H1 (cell line): ENCODE measurements at regions of chr12 and their contacts with region 1.

Region 1: DNA sequence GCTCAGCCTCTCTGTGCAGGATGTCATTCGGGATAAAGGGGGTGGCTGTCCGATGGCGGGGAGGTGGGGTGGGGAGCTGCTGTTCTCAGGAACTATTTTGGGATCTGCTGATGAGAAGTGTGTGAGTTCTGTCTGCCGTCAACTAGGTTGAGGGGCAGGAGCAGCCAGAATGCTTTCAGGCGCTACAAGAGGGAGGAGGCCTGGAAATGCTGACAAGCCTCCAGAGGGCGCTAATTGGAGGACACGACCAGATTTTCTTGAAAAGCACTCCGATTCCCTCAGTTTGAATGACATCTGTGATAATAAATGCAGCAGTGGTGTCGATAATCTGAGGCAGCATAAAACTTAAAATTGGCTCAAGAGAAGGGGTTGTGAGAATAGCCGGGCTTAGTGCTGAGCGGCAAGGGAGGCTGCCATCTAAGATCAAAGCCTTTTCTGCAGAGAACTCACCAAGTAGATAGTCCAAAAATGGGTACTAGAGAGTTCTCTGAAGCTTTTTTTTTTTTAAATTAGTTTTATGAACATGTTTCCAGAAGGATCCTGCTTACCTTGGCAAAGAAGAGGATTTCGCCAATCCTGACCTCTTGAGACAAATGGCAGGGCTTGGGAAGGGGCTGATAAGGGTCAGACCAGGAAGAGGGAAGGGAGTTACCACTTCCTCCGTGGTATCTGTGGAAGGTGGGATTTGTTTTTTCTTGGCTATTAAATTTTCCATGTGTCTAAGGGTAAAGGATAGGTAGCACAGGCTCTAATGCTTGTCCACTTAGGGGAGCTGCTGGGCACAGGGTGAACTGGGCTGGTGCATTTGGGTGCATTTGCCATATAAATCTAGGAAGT is 94.4 kb downstream of the CRACR2A start:
- DNase-seq: peak; percentile 21 to 68
- H3K4me3 ChIP-seq: no peak overlapping the region
- H3K27ac ChIP-seq: no peak overlapping the region
- H3K4me1 ChIP-seq: peaks cover 0 to 10% (median 2%) of the 10 kb centered on the region in 4 experiments; a peak in 2 of 7 replicates
- H3K27me3 ChIP-seq: no peaks in the 10 kb centered on the region
- CTCF ChIP-seq: peak; percentile 68 to 84 (median 77)
- EP300 ChIP-seq: no peak
- POLR2A ChIP-seq: no peak
- RAD21 ChIP-seq: peak; percentile 60 to 68

Region 2: DNA sequence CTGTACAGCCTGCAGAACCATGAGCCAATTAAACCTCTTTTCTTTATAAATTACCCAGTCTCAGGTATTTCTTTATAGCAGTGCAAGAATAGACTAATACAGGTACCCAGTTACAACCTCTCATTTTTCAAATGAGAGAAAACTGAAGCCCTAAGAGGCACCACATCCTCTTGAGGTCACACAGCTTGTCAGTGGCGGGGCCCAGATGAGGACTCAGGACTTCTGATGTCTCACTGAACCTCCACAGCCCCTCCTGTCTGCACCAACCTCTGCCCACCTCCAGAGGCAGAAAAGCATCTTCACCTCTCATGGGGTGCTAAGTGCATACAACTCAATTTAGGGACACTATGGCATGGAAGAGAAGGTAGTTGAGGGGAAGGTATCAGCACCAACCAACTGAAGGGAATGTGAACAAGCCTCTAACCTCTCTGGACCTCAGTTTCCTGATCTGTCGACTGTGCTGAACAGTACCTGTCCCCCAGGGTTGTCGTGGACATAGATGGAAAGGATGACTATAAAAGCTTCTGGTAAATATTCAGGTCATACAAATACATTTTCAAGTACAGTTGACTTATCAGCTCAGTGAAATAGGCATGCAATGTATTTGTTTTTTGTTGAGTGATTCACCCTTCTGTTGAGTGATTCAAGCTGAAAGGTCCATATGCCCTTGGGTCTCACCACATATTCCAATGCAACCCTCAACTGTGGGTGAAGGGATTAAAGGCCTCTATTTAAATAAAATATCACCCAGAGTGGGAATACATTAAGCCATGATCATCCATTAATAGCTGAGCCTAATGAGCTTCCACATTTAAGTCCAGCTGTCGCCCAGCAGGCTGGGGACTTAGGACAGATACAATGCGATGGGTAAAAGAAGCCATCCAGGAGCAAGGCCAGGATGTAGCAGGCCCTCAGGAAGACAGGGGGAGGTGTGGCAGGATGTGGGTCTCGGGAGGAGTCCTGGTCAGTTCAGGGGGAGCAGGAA is 26.0 kb before region 1 on chr12:
- CTCF ChIA-PET with region 1: interaction called, 12 read pairs
- POLR2A ChIA-PET with region 1: no interaction called
- DNase-seq: no peak
- H3K4me3 ChIP-seq: no peak overlapping the region
- H3K27ac ChIP-seq: no peak overlapping the region
- H3K4me1 ChIP-seq: no peaks in the 10 kb centered on the region; a peak in 2 of 7 replicates
- H3K27me3 ChIP-seq: no peaks in the 10 kb centered on the region
- CTCF ChIP-seq: no peak
- EP300 ChIP-seq: no peak
- POLR2A ChIP-seq: no peak
- RAD21 ChIP-seq: no peak

Region 3: DNA sequence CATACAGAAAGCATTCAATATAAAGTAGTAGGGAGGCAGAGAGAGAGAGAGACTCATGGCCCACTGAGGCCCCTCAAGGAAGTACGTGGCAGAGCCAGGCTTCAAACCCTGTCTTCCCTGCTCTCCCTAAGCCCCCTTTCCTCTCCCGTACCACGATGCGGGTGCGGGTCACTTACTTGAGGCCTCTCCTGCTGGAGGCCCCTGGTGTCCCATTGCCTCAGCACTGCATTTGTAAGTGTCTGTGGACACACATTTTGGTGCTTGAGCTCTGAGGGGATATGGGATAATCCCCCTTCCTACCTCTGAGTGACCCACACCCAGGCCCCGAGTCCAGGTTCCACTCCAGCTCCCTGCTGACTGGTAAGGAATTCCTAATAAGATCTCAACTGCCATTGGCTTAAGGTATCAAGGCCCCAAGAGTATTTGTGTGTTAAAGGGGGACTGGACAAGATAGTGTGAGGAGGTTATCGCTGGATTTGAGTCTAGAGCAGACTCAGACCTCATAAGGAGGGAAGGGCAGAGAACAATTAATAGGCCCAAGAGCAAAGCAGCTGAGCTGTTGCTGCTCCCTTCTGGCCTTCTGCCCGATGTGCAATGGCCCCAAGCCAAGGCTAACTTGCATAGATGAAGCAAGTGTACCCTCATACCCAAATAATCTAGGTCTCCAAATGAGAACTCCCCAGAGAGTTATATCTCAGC is 22.5 kb after region 1 on chr12:
- CTCF ChIA-PET with region 1: interaction called, 10 read pairs
- POLR2A ChIA-PET with region 1: no interaction called
- DNase-seq: peak in 1 of 2 experiments; percentile 41
- H3K4me3 ChIP-seq: no peak overlapping the region
- H3K27ac ChIP-seq: no peak overlapping the region
- H3K4me1 ChIP-seq: no peaks in the 10 kb centered on the region
- H3K27me3 ChIP-seq: no peaks in the 10 kb centered on the region
- CTCF ChIP-seq: peak; percentile 34 to 52 (median 44); a peak in 3 of 4 replicates
- EP300 ChIP-seq: no peak
- POLR2A ChIP-seq: no peak
- RAD21 ChIP-seq: peak; percentile 63 to 72

Region 4: DNA sequence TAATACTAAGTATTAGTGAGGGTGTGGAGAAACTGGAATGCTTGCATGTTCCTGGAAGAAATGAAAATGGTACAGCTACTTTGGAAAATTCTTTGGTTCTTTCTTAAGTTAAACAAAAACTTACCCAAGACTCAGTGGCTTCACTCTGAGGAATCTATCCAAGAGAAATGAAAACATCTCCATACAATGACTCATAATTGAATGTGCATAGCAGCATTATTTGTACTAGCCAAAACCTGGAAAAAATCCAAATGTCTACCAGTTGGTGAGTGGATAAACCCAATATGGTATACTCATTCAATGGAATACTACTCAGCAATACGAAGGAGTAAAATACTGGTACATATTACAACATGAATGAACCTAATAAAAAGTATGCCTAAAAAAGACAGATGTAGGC is 112.3 kb after region 1 on chr12:
- CTCF ChIA-PET with region 1: interaction called, 18 read pairs
- POLR2A ChIA-PET with region 1: no interaction called
- DNase-seq: no peak
- H3K4me3 ChIP-seq: no peak overlapping the region
- H3K27ac ChIP-seq: no peak overlapping the region
- H3K4me1 ChIP-seq: peaks cover 0 to 4% (median 0%) of the 10 kb centered on the region in 4 experiments; a peak in 1 of 7 replicates
- H3K27me3 ChIP-seq: no peaks in the 10 kb centered on the region
- CTCF ChIP-seq: no peak
- EP300 ChIP-seq: no peak
- POLR2A ChIP-seq: no peak
- RAD21 ChIP-seq: no peak

Region 5: DNA sequence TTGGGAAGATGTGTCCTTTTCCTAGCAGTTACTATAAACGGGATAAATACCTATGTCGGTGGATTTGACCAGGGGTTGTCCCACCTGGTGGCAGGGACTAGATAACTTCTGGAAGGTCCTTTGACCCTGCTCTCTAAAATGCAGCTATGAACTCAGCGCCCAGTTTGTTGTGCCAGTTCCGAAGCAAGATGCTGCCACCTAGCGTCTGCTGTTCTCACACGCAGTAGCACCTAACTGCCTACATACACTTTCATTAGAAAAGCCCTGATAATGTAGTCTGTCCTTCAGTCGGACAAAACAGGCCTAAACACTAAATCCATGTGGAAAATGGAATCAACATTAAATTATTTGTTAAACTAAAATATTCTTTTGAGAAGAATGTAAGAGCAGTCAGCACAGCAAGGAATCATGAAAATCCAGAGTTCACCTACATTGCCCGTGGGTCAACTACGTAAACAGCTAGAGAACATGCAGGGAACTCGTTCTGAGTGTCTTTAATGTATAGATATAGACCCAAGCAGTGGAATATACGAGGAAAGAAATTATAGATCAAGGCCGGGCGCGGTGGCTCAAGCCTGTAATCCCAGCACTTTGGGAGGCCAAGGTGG is 145.4 kb after region 1 on chr12:
- CTCF ChIA-PET with region 1: interaction called, 11 read pairs
- POLR2A ChIA-PET with region 1: no interaction called
- DNase-seq: peak; percentile 38 to 79
- H3K4me3 ChIP-seq: no peak overlapping the region
- H3K27ac ChIP-seq: no peak overlapping the region
- H3K4me1 ChIP-seq: no peaks in the 10 kb centered on the region
- H3K27me3 ChIP-seq: no peaks in the 10 kb centered on the region
- CTCF ChIP-seq: peak; percentile 78 to 91 (median 90)
- EP300 ChIP-seq: no peak
- POLR2A ChIP-seq: no peak
- RAD21 ChIP-seq: peak; percentile 91 to 94